CD8-positive, alpha-beta T cell (primary cell): ENCODE measurements at regions of chr5 and their contacts with region 1.

Region 1: GRCh38 chr5:87686975-87687374 is 274.2 kb upstream of the CCNH start:
- DNase-seq: no peak
- ATAC-seq: no peak
- H3K4me3 ChIP-seq: no peak overlapping the region
- H3K4me3 Mint-ChIP-seq: no peak overlapping the region
- H3K27ac ChIP-seq: no peak overlapping the region
- H3K27ac Mint-ChIP-seq: no peak overlapping the region
- H3K4me1 ChIP-seq: no peaks in the 10 kb centered on the region
- H3K4me1 Mint-ChIP-seq: no peaks in the 10 kb centered on the region
- H3K27me3 ChIP-seq: no peaks in the 10 kb centered on the region
- H3K27me3 Mint-ChIP-seq: no peaks in the 10 kb centered on the region
- CTCF ChIP-seq: no peak

Region 2: GRCh38 chr5:87671146-87671545 is 15.8 kb before region 1 on chr5:
- CTCF ChIA-PET with region 1: no interaction called
- POLR2A ChIA-PET with region 1: interaction called, 3 read pairs
- intact Hi-C with region 1: loop called in 1 of 2 experiments (anchors 1 kb)
- DNase-seq: no peak
- ATAC-seq: no peak
- H3K4me3 ChIP-seq: no peak overlapping the region
- H3K4me3 Mint-ChIP-seq: no peak overlapping the region
- H3K27ac ChIP-seq: no peak overlapping the region
- H3K27ac Mint-ChIP-seq: no peak overlapping the region
- H3K4me1 ChIP-seq: no peaks in the 10 kb centered on the region
- H3K4me1 Mint-ChIP-seq: no peaks in the 10 kb centered on the region
- H3K27me3 ChIP-seq: no peaks in the 10 kb centered on the region
- H3K27me3 Mint-ChIP-seq: no peaks in the 10 kb centered on the region
- CTCF ChIP-seq: no peak